HepG2 (cell line): ENCODE measurements at regions of chr7 and their contacts with region 1.

Region 1: GRCh38 chr7:23474094-23474828 is 4.0 kb upstream of the IGF2BP3 start:
- DNase-seq: peak; percentile 96
- ATAC-seq: peak; percentile 80
- H3K4me3 ChIP-seq: peak overlapping the region; percentile 86 to 93 (median 91)
- H3K27ac ChIP-seq: peak overlapping the region; percentile 96
- H3K4me1 ChIP-seq: peaks cover 25% of the 10 kb centered on the region
- H3K27me3 ChIP-seq: no peaks in the 10 kb centered on the region; a peak in 1 of 5 replicates
- CTCF ChIP-seq: peak; percentile 13; the same call in 1 of the 2 replicates
- EP300 ChIP-seq: 0 out of 4 replicates have a peak, but pooled peaks of 1 of the 2 experiments have one; percentile 5
- POLR2A ChIP-seq: peak in 1 of 2 experiments; percentile 74; a peak in 1 of 4 replicates
- RAD21 ChIP-seq: no peak; the same call in 1 of the 2 replicates

Region 2: GRCh38 chr7:23013715-23014649 is 460.3 kb before region 1 on chr7 and contains the start of gene HYCC1:
- CTCF ChIA-PET with region 1: no interaction called
- POLR2A ChIA-PET with region 1: no interaction called
- in situ Hi-C with region 1: no loop called
- intact Hi-C with region 1: loop called (anchors 5 kb)
- DNase-seq: peak; percentile 96
- ATAC-seq: peak; percentile 98
- H3K4me3 ChIP-seq: peak within 1 kb of the TSS; percentile 88 to 91 (median 88)
- H3K27ac ChIP-seq: peak within 1 kb of the TSS; percentile 70
- H3K4me1 ChIP-seq: peaks cover 65% of the 10 kb centered on the region
- H3K27me3 ChIP-seq: no peaks in the 10 kb centered on the region
- CTCF ChIP-seq: peak; percentile 64
- EP300 ChIP-seq: no peak
- POLR2A ChIP-seq: peak; percentile 96 to 99
- RAD21 ChIP-seq: no peak
- total RNA-seq, gene HYCC1: 41.8 and 52.2 TPM in 2 replicates

Region 3: DNA sequence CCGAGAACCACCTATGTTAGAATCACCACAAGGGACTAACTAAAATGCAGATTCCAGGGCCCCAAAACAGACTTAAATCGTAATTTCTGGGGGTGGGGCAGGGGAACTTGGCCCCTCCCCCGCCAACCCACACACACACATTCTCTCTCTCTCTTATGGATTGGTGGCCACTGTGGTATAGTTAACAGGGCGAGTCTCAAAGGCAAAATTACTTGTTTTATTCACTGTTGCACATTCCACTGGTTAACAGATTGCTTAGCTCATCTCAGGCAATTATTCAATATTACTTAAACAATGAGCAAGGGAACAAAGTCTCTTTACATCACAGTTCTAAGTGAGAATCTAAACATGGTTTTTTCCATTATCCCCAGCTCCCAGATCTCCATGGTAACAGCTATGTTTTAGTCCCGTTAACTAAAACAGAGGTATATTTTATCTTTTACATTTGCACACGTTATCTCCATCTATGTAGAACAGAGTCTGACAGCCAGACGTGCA is 42.5 kb before region 1 on chr7:
- CTCF ChIA-PET with region 1: no interaction called
- POLR2A ChIA-PET with region 1: no interaction called
- in situ Hi-C with region 1: no loop called
- intact Hi-C with region 1: no loop called
- DNase-seq: no peak
- ATAC-seq: no peak
- H3K4me3 ChIP-seq: no peak overlapping the region
- H3K27ac ChIP-seq: peak overlapping the region; percentile 17
- H3K4me1 ChIP-seq: peaks cover 28% of the 10 kb centered on the region
- H3K27me3 ChIP-seq: no peaks in the 10 kb centered on the region
- CTCF ChIP-seq: no peak
- EP300 ChIP-seq: no peak
- POLR2A ChIP-seq: no peak
- RAD21 ChIP-seq: no peak

Region 4: GRCh38 chr7:23514755-23515154 is 40.5 kb after region 1 on chr7:
- CTCF ChIA-PET with region 1: no interaction called
- POLR2A ChIA-PET with region 1: no interaction called
- in situ Hi-C with region 1: no loop called
- intact Hi-C with region 1: no loop called
- DNase-seq: no peak
- ATAC-seq: no peak
- H3K4me3 ChIP-seq: no peak overlapping the region
- H3K27ac ChIP-seq: no peak overlapping the region
- H3K4me1 ChIP-seq: no peaks in the 10 kb centered on the region
- H3K27me3 ChIP-seq: no peaks in the 10 kb centered on the region
- CTCF ChIP-seq: no peak
- EP300 ChIP-seq: no peak
- POLR2A ChIP-seq: no peak
- RAD21 ChIP-seq: no peak

Region 5: DNA sequence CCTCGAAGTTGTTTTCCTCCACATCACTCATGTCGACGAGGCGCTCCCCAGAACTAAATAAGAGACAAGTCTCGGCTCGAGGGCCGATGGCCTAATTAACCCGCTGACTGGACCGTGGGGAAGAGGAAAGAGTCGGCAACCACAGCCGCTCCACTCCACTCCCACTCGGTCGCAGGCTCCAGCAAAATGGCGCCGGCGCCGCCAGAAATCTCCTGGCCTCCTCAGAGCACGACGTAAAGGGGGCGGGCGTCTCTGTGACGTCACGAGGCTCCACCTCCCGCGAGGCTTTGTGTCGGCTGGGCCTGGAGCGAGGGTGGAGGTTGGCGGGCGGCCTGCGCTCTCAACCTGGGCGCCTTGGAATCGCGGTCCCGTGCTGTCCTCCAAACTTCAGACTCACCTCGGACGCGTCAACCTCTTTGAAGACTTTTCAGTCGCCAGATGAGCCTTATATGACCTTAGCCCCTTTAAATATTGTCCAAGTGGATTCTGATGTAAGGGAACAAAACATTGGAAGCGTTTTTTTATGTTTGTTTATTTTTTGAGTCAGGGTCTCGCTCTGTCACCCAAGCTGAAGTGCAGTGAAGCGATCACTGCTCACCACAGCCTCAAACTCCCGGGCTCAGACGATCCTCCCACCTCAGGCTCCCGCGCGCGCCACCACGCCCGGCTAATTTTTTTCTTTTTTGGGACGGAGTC is 57.7 kb after region 1 on chr7 and contains the start of gene TRA2A:
- CTCF ChIA-PET with region 1: no interaction called
- POLR2A ChIA-PET with region 1: interaction called, 4 read pairs
- in situ Hi-C with region 1: no loop called
- intact Hi-C with region 1: loop called (anchors 2 kb)
- DNase-seq: peak; percentile 90
- ATAC-seq: peak; percentile 95
- H3K4me3 ChIP-seq: peak within 1 kb of the TSS; percentile 73 to 98 (median 98)
- H3K27ac ChIP-seq: peak within 1 kb of the TSS; percentile 95
- H3K4me1 ChIP-seq: peaks cover 37% of the 10 kb centered on the region
- H3K27me3 ChIP-seq: no peaks in the 10 kb centered on the region; a peak in 1 of 5 replicates
- CTCF ChIP-seq: no peak; the same call in 1 of the 2 replicates
- EP300 ChIP-seq: no peak
- POLR2A ChIP-seq: peak; percentile 98 to 99
- RAD21 ChIP-seq: no peak; the same call in 1 of the 2 replicates
- total RNA-seq, gene TRA2A: 39.1 and 52.7 TPM in 2 replicates